PC-3 (cell line): ENCODE measurements at regions of chr5 and their contacts with region 1.

Region 1: GRCh38 chr5:105782501-105782900 is 1888.2 kb downstream of the EFNA5 start:
- DNase-seq: no peak
- ATAC-seq: no peak
- H3K4me3 ChIP-seq: no peak overlapping the region
- H3K27ac ChIP-seq: no peak overlapping the region
- H3K4me1 ChIP-seq: no peaks in the 10 kb centered on the region
- H3K27me3 ChIP-seq: no peaks in the 10 kb centered on the region
- CTCF ChIP-seq: no peak

Region 2: GRCh38 chr5:105868038-105868780 is 85.7 kb after region 1 on chr5:
- CTCF ChIA-PET with region 1: no interaction called
- POLR2A ChIA-PET with region 1: no interaction called
- intact Hi-C with region 1: no loop called
- DNase-seq: no peak
- ATAC-seq: no peak
- H3K4me3 ChIP-seq: no peak overlapping the region
- H3K27ac ChIP-seq: no peak overlapping the region
- H3K4me1 ChIP-seq: no peaks in the 10 kb centered on the region
- H3K27me3 ChIP-seq: no peaks in the 10 kb centered on the region
- CTCF ChIP-seq: no peak

Region 3: DNA sequence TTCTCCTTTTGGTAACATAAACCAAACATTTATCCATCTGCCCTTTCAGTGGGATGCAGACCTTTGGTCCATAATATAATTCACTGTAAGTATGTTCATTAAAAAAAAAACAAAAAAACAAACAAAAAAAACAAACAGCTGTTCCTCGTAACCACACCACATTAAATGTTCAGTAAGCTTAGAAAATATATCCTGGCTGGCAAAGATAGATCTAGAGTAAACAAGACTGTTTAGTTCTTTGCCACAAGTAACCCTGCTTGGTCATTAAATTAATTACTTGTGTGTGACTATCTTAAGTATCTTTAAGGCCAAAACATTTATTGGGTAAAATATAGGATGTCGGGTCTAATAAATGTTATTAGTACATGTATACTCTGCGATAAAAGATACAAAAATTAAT is 171.1 kb after region 1 on chr5:
- CTCF ChIA-PET with region 1: no interaction called
- POLR2A ChIA-PET with region 1: interaction called, 12 read pairs
- intact Hi-C with region 1: no loop called
- DNase-seq: no peak
- ATAC-seq: no peak
- H3K4me3 ChIP-seq: no peak overlapping the region
- H3K27ac ChIP-seq: no peak overlapping the region
- H3K4me1 ChIP-seq: peaks cover 9% of the 10 kb centered on the region
- H3K27me3 ChIP-seq: no peaks in the 10 kb centered on the region
- CTCF ChIP-seq: no peak